ENCODE measurements at regions of chr4 and their contacts with region 1.

Region 1: GRCh38 chr4:6909073-6909965 is at the start of gene TBC1D14:
- DNase-seq: peak; percentile 51
- H3K4me3 ChIP-seq: peak within 1 kb of the TSS; percentile 73
- H3K27ac ChIP-seq: peak within 1 kb of the TSS; percentile 94
- H3K27me3 ChIP-seq: peaks cover 3% of the 10 kb centered on the region
- CTCF ChIP-seq: peak; percentile 23; the same call in 1 of the 2 replicates
- polyA plus RNA-seq, gene TBC1D14: 46.3 and 47.1 TPM in 2 replicates

Region 2: DNA sequence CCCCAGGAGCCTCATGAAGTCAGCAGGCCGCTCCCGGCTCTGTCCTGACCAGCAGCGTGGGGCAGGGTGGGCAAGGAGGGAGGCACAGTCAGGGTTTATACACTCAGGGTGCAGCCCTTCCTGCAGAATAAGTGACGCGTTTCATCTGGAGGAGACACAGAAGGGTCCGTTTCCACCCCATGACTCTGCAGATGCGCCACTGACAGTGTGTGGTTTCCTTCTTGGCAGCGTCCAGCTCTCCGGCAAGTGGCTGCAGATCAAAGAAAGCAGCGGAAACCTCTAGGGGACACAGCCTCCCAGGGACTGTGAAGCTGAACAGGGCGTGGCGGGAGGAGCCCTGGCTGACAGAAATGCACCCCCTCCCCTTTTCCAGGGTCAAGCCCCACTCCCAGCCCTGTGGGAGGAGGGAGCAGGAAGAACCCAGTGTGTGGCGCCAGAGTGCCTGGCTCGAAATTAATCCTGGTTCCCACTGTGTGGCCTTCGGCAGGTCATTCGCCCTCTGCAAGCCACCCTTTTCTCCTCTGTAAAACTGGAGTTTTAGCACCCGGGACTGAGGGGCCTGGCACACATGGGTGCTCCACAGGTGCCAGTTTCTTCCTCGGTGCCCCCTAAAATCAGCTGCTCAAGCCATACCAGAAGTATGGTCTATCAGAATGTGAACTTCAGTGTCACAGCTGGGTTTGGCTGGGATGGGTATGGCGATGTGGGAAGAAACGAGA is 17.0 kb before region 1 on chr4:
- CTCF ChIA-PET with region 1: interaction called, 5 read pairs
- POLR2A ChIA-PET with region 1: interaction called, 12 read pairs
- DNase-seq: no peak
- H3K4me3 ChIP-seq: no peak overlapping the region
- H3K27ac ChIP-seq: peak overlapping the region; percentile 96
- H3K27me3 ChIP-seq: no peaks in the 10 kb centered on the region
- CTCF ChIP-seq: no peak

Region 3: DNA sequence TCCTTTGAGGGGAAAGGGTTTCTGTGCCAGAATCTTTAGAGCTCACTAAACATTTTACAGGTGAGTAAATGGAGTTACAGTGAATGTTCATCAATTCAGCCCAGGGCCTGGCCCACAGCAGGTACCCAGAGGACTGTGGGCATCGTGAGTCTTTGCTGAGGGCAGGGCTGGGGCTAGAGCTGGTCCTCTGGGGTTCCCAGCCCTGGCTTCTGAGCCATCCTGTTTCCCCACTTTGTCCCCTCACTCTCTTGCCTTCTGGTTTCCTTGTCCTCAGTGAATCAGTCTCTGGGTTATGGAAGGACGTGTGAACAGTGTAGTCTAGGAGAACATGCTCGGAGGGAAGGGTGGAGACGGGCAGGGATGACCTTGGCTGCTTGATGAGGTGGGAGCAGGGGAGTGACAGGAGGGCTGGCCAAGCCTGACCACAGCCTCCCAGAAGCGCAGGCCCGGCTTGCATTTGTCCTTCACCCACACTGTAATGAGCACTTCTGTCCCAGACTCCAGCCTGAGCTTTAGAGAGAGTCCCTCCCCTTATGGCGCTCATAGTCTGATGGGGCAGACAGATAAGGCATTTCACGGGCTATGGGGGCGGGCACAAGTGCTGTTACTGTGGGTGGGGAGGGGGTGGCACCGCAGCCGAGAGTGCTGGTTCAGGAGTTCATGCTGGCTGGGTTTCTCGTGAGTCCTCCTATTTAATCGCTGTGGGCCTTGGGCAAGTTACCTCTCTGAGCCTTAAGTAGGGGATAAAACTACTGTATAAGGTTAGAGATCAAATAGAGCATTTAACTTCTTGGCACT is 17.6 kb after region 1 on chr4:
- CTCF ChIA-PET with region 1: interaction called, 8 read pairs
- POLR2A ChIA-PET with region 1: interaction called, 10 read pairs
- DNase-seq: no peak
- H3K4me3 ChIP-seq: no peak overlapping the region
- H3K27ac ChIP-seq: no peak overlapping the region
- H3K27me3 ChIP-seq: no peaks in the 10 kb centered on the region
- CTCF ChIP-seq: no peak

Region 4: GRCh38 chr4:6986781-6987587 is 77.7 kb after region 1 on chr4:
- CTCF ChIA-PET with region 1: interaction called, 3 read pairs
- POLR2A ChIA-PET with region 1: interaction called, 21 read pairs
- DNase-seq: peak; percentile 66
- H3K4me3 ChIP-seq: peak overlapping the region; percentile 95
- H3K27ac ChIP-seq: peak overlapping the region; percentile 95
- H3K27me3 ChIP-seq: no peaks in the 10 kb centered on the region
- CTCF ChIP-seq: no peak

Region 5: GRCh38 chr4:7042697-7043464 is 133.6 kb after region 1 on chr4 and contains the start of gene TADA2B:
- CTCF ChIA-PET with region 1: interaction called, 10 read pairs
- POLR2A ChIA-PET with region 1: interaction called, 7 read pairs
- DNase-seq: peak; percentile 92
- H3K4me3 ChIP-seq: peak within 1 kb of the TSS; percentile 92
- H3K27ac ChIP-seq: peak within 1 kb of the TSS; percentile 70
- H3K27me3 ChIP-seq: no peaks in the 10 kb centered on the region
- CTCF ChIP-seq: no peak
- polyA plus RNA-seq, gene TADA2B: 6.4 and 6.5 TPM in 2 replicates

Region 6: DNA sequence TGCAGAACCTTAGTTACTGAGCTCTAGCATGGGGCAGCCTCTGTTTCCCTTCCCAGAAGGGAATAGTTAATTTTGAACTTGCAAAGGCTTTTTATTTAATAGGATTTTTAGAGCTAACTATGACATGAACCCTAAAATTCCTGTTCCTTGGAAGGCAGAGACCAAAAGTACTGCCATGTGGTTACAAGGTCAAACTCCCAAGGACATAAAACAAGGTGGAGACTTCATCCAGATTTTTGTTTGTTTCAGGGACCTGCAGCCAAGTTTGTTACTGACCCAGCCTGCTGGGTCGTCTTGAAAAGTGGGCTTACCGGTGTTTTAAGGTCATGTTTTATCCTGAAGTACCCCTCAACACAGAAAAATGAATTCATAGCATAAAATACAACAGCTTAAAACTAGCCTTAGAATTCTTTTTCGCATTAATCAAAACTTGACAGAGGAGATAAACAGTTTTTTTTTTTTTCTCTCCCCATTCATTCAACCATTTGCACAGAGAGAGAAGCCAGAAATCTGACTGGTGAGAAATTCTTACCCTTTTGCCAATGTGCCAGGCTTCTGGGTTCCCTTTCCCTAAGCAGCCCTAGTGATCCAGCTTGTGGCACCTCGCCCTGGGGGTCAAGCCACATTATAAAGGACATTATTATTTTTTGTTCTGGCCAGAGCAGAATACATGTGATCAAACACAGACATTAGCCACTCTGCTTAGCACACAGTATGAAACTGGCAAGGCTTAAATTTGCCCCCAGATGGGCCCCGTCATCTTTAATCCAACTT is 180.1 kb after region 1 on chr4:
- CTCF ChIA-PET with region 1: no interaction called
- POLR2A ChIA-PET with region 1: no interaction called
- DNase-seq: no peak
- H3K4me3 ChIP-seq: no peak overlapping the region
- H3K27ac ChIP-seq: no peak overlapping the region
- H3K27me3 ChIP-seq: peaks cover 43% of the 10 kb centered on the region
- CTCF ChIP-seq: no peak

Region 7: GRCh38 chr4:7155590-7156071 is 246.3 kb after region 1 on chr4:
- CTCF ChIA-PET with region 1: no interaction called
- POLR2A ChIA-PET with region 1: no interaction called
- DNase-seq: no peak
- H3K4me3 ChIP-seq: no peak overlapping the region
- H3K27ac ChIP-seq: no peak overlapping the region
- H3K27me3 ChIP-seq: peaks cover 47% of the 10 kb centered on the region
- CTCF ChIP-seq: no peak

Region 8: DNA sequence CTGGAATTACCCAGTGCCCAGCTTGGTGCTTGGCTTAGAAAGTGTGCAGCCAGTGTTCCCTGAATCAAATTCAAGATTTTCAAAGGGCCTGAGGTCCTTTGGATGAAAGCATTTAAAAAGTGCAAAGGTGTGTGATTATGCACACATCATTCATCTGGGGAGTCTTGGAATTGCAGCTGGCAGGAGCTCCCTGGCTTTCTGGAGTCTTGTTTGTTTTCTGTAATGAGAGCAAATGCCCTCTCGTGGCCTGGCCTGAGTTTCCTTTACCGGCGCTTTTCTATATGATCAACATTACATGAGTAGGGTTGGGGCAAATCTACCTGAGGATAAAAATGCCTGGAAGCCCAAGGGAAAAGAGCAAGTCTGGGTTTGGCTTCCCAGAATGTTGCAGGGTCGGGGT is 258.4 kb after region 1 on chr4:
- CTCF ChIA-PET with region 1: no interaction called
- POLR2A ChIA-PET with region 1: no interaction called
- DNase-seq: no peak
- H3K4me3 ChIP-seq: no peak overlapping the region
- H3K27ac ChIP-seq: no peak overlapping the region
- H3K27me3 ChIP-seq: peaks cover 33% of the 10 kb centered on the region
- CTCF ChIP-seq: no peak